ENCODE measurements at regions of chrX and their contacts with region 1.

Region 1: GRCh38 chrX:32530802-32531403 is 680.4 kb downstream of the DMD start:
- DNase-seq: peak; percentile 52
- ATAC-seq: peak; percentile 29; the same call in 1 of the 2 replicates
- H3K4me3 ChIP-seq: no peak overlapping the region
- H3K27ac ChIP-seq: no peak overlapping the region
- H3K4me1 ChIP-seq: no peaks in the 10 kb centered on the region
- H3K27me3 ChIP-seq: no peaks in the 10 kb centered on the region
- CTCF ChIP-seq: peak; percentile 73
- POLR2A ChIP-seq: no peak
- RAD21 ChIP-seq: peak; percentile 64

Region 2: DNA sequence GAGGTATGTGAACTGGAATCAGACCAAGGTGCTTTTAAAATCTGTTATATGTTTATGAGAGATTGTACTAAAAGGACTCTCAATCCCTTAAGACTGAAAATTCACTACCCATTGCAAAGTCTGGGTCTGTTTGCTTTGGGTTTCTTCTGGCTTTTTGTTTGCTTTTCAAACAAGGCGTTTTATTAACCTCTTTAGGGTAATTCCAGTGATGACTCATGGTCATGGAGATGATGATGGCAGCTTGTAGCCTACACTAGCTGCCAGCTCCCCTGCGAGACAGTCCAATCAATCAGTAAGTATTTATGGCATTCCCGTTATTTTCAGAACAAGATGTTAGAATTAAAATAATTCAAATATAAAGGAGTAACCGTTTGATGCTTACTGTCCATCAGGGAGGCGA is 815.2 kb before region 1 on chrX:
- CTCF ChIA-PET with region 1: no interaction called
- POLR2A ChIA-PET with region 1: no interaction called
- dilution Hi-C with region 1: no loop called
- in situ Hi-C with region 1: no loop called
- intact Hi-C with region 1: no loop called
- DNase-seq: no peak
- ATAC-seq: no peak
- H3K4me3 ChIP-seq: no peak overlapping the region
- H3K27ac ChIP-seq: no peak overlapping the region
- H3K4me1 ChIP-seq: no peaks in the 10 kb centered on the region
- H3K27me3 ChIP-seq: no peaks in the 10 kb centered on the region
- CTCF ChIP-seq: no peak
- POLR2A ChIP-seq: no peak
- RAD21 ChIP-seq: no peak

Region 3: DNA sequence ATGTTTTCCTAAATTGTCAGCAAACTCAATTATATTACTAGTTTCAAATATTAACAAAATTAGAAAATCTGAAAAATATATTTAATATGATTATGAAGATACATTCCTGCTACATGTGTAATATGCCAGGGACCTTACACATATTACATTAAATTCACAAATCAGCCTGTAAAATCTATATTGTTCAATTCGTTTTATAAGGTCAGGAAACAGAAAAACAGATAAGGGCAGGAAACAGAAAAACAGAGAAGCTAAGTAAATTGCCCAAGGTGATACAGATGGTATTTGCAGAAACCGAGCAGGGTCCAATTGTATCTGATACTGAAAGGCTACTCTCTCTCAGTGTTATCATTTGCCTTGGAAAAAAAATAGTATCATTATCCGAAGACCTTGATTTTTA is 58.5 kb before region 1 on chrX:
- CTCF ChIA-PET with region 1: no interaction called
- POLR2A ChIA-PET with region 1: no interaction called
- dilution Hi-C with region 1: no loop called
- in situ Hi-C with region 1: no loop called
- intact Hi-C with region 1: no loop called
- DNase-seq: no peak
- ATAC-seq: no peak
- H3K4me3 ChIP-seq: no peak overlapping the region
- H3K27ac ChIP-seq: no peak overlapping the region
- H3K4me1 ChIP-seq: no peaks in the 10 kb centered on the region
- H3K27me3 ChIP-seq: no peaks in the 10 kb centered on the region
- CTCF ChIP-seq: no peak
- POLR2A ChIP-seq: no peak
- RAD21 ChIP-seq: no peak

Region 4: GRCh38 chrX:32673193-32673592 is 142.3 kb after region 1 on chrX:
- CTCF ChIA-PET with region 1: no interaction called
- POLR2A ChIA-PET with region 1: no interaction called
- dilution Hi-C with region 1: no loop called
- in situ Hi-C with region 1: no loop called
- intact Hi-C with region 1: loop called (anchors 5 kb)
- DNase-seq: peak; percentile 7
- ATAC-seq: peak; percentile 35
- H3K4me3 ChIP-seq: no peak overlapping the region
- H3K27ac ChIP-seq: no peak overlapping the region
- H3K4me1 ChIP-seq: no peaks in the 10 kb centered on the region
- H3K27me3 ChIP-seq: no peaks in the 10 kb centered on the region
- CTCF ChIP-seq: no peak
- POLR2A ChIP-seq: no peak
- RAD21 ChIP-seq: no peak

Region 5: DNA sequence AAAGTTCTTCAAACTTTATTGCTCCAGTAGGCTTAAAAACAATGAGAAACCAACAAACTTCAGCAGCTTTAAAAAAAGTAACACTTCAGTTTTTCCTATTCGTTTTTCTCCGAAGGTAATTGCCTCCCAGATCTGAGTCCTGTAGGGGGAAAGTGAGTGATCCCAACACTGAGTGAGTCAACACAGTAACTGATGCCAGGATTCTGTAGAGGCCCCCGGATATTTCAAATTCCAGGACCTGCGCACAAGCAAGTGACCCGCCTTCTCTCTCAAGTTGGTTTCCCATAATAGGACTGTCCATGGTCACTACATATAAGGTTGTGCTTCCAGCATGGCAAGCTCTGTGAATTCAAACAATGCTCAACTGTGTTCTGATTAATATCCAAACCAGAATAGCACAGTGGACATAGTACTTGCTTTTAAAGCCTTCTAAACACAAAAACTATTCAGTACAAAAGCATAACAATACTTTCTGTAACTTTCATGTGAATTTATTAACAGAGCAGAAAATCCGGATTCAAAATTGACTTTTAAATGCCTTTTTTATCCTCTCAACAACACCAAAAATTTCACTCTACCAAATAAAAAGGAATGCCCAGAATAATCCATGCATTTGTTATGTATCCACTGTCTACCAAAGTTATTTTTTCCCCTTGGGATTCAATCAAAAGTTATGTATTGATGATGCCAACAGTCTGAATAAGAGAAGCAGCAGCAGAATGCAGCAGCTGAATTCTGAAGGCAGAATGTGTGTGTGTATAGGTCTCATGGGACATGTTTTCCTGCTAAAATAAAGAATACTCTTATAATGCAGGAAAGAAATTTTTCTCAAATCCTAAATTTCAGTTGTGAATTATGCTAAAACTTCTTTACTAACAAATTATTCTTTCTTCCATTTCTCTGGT is 680.7 kb after region 1 on chrX and contains the start of gene DMD:
- CTCF ChIA-PET with region 1: no interaction called
- POLR2A ChIA-PET with region 1: no interaction called
- dilution Hi-C with region 1: no loop called
- in situ Hi-C with region 1: no loop called
- intact Hi-C with region 1: loop called (anchors 1 kb)
- DNase-seq: peak; percentile 84
- ATAC-seq: peak; percentile 92
- H3K4me3 ChIP-seq: peak within 1 kb of the TSS; percentile 51
- H3K27ac ChIP-seq: peak within 1 kb of the TSS; percentile 33; the same call in 1 of the 2 replicates
- H3K4me1 ChIP-seq: no peaks in the 10 kb centered on the region
- H3K27me3 ChIP-seq: no peaks in the 10 kb centered on the region
- CTCF ChIP-seq: 0 out of 2 replicates have a peak, but pooled peaks have one; percentile 4
- POLR2A ChIP-seq: no peak
- RAD21 ChIP-seq: no peak
- total RNA-seq, gene DMD: 10.6 and 11.8 TPM in 2 replicates

Region 6: DNA sequence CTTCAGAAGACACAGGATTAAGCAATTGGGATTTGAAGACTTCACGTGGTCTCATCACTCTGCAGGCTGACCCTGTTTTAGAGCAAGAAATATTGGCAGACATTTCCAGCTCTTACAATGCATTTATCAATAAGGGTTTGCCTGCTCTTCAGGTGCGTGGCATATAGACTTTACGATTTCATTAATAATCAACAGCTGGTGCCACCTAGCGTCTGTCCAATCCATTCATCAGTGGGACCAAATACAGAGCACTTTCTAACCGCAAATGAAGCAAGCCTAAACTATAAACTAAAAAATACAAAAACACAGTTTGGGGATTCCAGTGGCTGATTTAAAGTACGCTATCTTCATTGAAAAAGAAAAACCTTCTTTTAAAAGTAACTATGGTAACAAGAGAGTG is 805.9 kb after region 1 on chrX:
- CTCF ChIA-PET with region 1: interaction called, 3 read pairs
- POLR2A ChIA-PET with region 1: no interaction called
- dilution Hi-C with region 1: no loop called
- in situ Hi-C with region 1: loop called (anchors 10 kb)
- intact Hi-C with region 1: loop called (anchors 1 kb)
- DNase-seq: peak; percentile 29
- ATAC-seq: no peak
- H3K4me3 ChIP-seq: no peak overlapping the region
- H3K27ac ChIP-seq: no peak overlapping the region
- H3K4me1 ChIP-seq: no peaks in the 10 kb centered on the region
- H3K27me3 ChIP-seq: no peaks in the 10 kb centered on the region
- CTCF ChIP-seq: peak; percentile 47
- POLR2A ChIP-seq: no peak
- RAD21 ChIP-seq: peak; percentile 54

Measured in IMR-90 (cell line).